GM10248 (cell line): ENCODE measurements at regions of chr15 and their contacts with region 1.

Region 1: DNA sequence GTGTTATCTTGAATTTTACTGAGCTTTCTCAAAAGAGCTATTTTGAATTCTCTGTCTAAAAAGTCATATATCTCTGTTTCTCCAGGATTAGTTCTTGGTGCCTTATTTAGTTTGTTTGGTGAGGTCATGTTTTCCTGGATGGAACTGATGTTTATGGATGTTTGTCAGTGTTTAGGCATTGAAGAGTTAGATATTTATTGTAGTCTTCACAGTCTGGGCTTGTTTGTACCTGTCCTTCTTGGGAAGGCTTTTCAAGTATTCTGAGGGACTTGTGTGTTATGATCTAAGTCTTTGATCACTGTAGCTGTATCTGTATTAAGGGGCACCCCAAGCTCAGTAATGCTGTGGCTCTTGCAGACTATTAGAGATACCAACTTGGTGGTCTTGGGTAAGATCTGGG is 10.6 kb upstream of the RAD51 start:
- DNase-seq: no peak
- CTCF ChIP-seq: no peak

Region 2: DNA sequence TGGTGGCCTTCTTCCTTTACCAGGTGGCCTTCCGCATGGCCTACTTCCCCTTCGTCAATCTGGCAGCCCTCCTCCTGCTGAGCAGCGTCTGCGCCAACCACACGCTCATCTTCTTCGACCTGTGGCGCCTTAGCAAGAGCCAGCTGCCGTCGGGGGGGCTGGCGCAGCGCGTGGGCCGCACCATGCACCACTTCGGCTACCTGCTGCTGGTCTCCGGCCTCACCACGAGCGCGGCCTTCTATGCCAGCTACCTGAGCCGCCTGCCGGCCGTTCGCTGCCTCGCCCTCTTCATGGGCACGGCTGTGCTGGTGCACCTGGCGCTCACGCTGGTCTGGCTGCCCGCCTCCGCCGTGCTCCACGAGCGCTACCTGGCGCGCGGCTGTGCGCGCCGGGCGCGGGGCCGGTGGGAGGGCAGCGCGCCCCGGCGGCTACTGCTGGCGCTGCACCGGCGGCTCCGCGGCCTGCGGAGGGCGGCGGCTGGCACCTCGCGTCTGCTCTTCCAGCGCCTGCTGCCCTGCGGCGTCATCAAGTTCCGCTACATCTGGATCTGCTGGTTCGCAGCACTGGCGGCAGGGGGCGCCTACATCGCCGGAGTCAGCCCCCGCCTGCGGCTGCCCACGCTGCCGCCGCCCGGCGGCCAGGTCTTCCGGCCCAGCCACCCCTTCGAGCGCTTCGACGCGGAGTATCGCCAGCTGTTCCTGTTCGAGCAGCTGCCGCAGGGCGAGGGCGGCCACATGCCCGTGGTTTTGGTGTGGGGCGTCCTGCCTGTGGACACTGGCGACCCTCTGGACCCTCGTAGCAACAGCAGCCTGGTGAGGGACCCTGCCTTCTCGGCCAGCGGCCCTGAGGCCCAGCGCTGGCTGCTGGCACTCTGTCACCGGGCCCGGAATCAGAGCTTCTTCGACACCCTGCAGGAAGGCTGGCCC is 316.4 kb before region 1 on chr15:
- CTCF ChIA-PET with region 1: no interaction called
- POLR2A ChIA-PET with region 1: no interaction called
- DNase-seq: peak; percentile 92
- CTCF ChIP-seq: peak; percentile 88

Region 3: GRCh38 chr15:40506964-40507571 is 177.3 kb before region 1 on chr15:
- CTCF ChIA-PET with region 1: no interaction called
- POLR2A ChIA-PET with region 1: no interaction called
- DNase-seq: peak; percentile 81
- CTCF ChIP-seq: peak; percentile 72

Region 4: GRCh38 chr15:40664909-40665308 is 19.5 kb before region 1 on chr15:
- CTCF ChIA-PET with region 1: interaction called, 10 read pairs
- POLR2A ChIA-PET with region 1: no interaction called
- DNase-seq: no peak
- CTCF ChIP-seq: no peak

Region 5: DNA sequence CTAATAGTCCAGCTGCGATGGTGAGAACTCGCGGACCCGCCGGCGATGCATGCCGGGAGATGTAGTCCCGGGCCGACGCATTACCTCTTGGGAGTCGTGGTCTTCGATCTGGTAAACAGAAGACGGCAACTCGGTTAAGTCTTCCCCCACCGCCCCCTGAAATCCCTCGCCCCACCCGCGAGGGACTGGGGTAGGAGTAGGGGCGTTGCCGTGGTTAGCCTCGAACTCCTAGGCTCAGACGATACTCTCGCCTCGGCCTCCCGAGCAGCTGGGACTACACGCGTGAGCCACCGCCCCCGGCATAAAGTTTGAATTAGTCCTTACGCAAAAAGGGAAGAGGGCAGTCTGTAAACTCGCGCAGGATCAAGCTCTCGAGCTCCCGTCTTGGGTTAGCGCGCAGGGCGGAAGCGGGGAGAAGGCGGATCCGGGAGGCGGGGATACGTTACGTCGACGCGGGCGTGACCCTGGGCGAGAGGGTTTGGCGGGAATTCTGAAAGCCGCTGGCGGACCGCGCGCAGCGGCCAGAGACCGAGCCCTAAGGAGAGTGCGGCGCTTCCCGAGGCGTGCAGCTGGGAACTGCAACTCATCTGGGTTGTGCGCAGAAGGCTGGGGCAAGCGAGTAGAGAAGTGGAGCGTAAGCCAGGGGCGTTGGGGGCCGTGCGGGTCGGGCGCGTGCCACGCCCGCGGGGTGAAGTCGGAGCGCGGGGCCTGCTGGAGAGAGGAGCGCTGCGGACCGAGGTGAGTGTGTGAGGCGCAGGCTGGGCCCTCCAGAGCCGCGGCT is 10.5 kb after region 1 on chr15 and contains the start of gene RAD51:
- CTCF ChIA-PET with region 1: interaction called, 30 read pairs
- POLR2A ChIA-PET with region 1: no interaction called
- DNase-seq: peak; percentile 95
- CTCF ChIP-seq: no peak